ENCODE measurements at regions of chr5 and their contacts with region 1.

Region 1: DNA sequence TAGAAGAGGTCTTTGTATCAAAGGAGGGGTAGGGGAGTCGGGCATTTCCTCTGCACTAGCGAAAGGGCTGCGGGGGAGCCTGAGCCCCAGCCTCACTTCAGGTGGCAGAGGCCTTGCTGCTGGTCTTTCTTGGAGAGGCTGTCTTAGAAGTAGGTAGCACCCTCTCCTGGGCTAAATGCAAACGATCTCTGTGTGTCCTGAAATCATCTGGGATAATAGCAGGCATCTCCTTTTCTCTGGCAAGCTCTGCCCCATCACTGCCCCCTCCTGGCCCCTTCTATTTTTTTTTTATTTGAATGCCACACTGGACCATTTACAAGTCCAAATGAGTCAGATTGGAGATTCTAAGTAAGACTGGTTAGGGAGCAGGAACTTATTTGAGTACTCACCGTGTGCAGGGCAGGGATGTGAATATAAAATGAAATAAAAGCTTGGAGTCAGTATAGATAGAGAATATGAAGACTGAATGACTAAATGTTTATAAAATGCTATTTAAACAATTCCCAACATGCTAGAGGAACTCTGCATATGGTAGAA is 137.1 kb downstream of the FGF1 start:
- DNase-seq: peak; percentile 98
- H3K4me3 ChIP-seq: no peak overlapping the region
- CTCF ChIP-seq: peak; percentile 87

Region 2: DNA sequence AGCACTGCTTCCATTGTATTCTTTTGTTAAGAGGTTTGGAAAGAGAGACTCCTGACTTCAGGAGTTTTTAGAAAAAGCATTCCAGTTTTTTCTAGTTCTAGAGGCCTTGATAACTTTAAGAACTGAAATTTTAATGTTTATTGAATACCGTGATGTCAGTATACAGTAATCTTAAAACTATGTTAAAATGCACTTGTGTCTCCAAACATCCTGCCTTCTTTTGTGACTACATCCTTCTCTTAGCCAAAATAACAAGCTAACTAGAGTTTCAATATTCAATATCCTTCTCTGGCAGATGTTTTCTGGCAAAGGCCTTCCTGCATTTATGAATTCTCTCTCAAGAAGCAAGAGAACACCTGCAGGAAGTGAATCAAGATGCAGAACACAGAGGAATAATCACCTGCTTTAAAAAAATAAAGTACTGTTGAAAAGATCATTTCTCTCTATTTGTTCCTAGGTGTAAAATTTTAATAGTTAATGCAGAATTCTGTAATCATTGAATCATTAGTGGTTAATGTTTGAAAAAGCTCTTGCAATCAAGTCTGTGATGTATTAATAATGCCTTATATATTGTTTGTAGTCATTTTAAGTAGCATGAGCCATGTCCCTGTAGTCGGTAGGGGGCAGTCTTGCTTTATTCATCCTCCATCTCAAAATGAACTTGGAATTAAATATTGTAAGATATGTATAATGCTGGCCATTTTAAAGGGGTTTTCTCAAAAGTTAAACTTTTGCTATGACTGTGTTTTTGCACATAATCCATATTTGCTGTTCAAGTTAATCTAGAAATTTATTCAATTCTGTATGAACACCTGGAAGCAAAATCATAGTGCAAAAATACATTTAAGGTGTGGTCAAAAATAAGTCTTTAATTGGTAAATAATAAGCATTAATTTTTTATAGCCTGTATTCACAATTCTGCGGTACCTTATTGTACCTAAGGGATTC is 397.1 kb before region 1 on chr5:
- in situ Hi-C with region 1: loop called (anchors 25 kb)
- DNase-seq: peak; percentile 86
- H3K4me3 ChIP-seq: no peak overlapping the region
- CTCF ChIP-seq: peak; percentile 74

Region 3: GRCh38 chr5:142420561-142421227 is 128.1 kb before region 1 on chr5:
- in situ Hi-C with region 1: no loop called
- DNase-seq: no peak
- H3K4me3 ChIP-seq: no peak overlapping the region
- CTCF ChIP-seq: no peak